ENCODE measurements at regions of chr11 and their contacts with region 1.

Region 1: GRCh38 chr11:12331239-12331874 is 46.0 kb upstream of the PARVA start:
- DNase-seq: peak; percentile 91
- H3K4me3 ChIP-seq: no peak overlapping the region
- H3K27ac ChIP-seq: no peak overlapping the region
- H3K4me1 ChIP-seq: no peaks in the 10 kb centered on the region
- H3K27me3 ChIP-seq: no peaks in the 10 kb centered on the region
- CTCF ChIP-seq: peak; percentile 62

Region 2: GRCh38 chr11:12377824-12378593 is 46.7 kb after region 1 on chr11:
- intact Hi-C with region 1: loop called (anchors 5 kb)
- DNase-seq: peak; percentile 86
- H3K4me3 ChIP-seq: peak overlapping the region; percentile 51
- H3K27ac ChIP-seq: peak overlapping the region; percentile 97
- H3K4me1 ChIP-seq: no peaks in the 10 kb centered on the region
- H3K27me3 ChIP-seq: no peaks in the 10 kb centered on the region
- CTCF ChIP-seq: no peak